ENCODE measurements at regions of chr1 and their contacts with region 1.

Region 1: GRCh38 chr1:64308866-64309265 is 105.4 kb downstream of the UBE2U start:
- DNase-seq: peak in 1 of 2 donors; percentile 70
- H3K4me3 ChIP-seq: no peak overlapping the region
- H3K27ac ChIP-seq: peak overlapping the region; percentile 78 to 90
- H3K4me1 ChIP-seq: no peaks in the 10 kb centered on the region
- H3K27me3 ChIP-seq: no peaks in the 10 kb centered on the region
- CTCF ChIP-seq: no peak
- POLR2A ChIP-seq: no peak

Region 2: DNA sequence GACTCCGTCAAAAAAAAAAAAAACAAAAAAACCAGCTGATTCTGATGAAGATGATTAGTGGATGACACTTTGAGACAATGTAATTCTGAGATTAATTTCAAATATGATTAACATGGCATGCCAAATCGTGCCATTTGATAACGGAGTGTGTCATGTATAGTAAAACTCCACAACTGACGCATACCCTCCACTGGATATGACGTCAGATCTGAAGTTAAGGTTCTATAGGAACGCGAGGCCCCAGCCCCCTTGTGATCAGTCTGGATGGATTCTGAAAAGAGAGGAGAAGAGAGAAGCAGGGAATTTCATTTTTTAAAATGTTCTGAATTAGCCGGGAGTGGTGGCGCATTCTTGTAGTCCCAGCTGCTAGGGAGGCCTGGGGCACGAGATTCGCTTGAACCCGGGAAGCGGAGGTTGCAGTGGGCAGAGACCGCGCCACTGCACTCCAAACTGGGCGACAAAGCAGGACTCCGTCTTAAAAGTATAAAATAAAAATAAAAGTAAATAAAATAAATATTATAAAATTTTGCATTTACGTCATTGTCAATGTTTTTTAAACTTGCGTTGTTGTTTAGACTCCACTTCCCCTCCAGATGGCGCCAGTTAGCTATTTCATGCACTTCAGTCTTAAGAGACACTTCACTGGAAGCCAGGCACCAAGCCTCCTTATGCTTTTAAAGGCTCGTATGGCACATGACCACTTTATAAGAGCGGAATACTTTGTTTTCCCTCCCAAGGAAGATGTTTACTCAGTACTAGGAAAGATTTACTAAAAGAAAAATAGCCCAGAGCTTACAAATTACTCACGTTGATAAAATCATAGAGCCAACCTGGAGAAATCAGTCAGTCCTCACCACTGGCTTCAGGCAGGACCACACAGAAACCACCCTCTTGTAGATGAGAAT is 40.0 kb before region 1 on chr1:
- intact Hi-C with region 1: no loop called
- DNase-seq: peak; percentile 56 to 62
- H3K4me3 ChIP-seq: peak overlapping the region in 2 of 3 donors; percentile 20 to 45
- H3K27ac ChIP-seq: peak overlapping the region; percentile 5 to 73
- H3K4me1 ChIP-seq: no peaks in the 10 kb centered on the region
- H3K27me3 ChIP-seq: no peaks in the 10 kb centered on the region
- CTCF ChIP-seq: peak in 2 of 3 donors; percentile 60 to 84
- POLR2A ChIP-seq: no peak

Region 3: GRCh38 chr1:64337475-64337874 is 28.6 kb after region 1 on chr1:
- intact Hi-C with region 1: no loop called
- DNase-seq: no peak
- H3K4me3 ChIP-seq: no peak overlapping the region
- H3K27ac ChIP-seq: no peak overlapping the region
- H3K4me1 ChIP-seq: no peaks in the 10 kb centered on the region
- H3K27me3 ChIP-seq: no peaks in the 10 kb centered on the region
- CTCF ChIP-seq: no peak
- POLR2A ChIP-seq: no peak

Region 4: DNA sequence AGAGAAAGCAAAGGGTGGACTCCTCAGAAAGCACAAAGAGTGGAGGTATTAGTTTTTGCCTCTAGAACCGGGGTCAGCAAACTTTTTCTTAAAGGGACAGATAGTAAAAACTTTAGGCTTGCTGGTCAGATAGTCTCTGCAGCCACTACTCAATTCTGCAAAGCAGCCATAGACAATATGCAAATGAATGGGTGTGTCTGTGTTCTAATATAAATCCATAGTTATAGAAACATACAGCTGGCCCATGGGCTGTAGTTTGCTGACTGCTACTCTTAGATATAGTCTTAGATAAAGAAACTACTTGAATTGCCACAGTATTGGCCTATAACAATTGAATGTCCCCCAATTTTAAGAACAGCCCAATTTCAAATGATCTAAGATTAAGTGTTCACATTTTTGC is 59.5 kb after region 1 on chr1:
- intact Hi-C with region 1: loop called (anchors 2 kb)
- DNase-seq: no peak
- H3K4me3 ChIP-seq: no peak overlapping the region
- H3K27ac ChIP-seq: no peak overlapping the region
- H3K4me1 ChIP-seq: no peaks in the 10 kb centered on the region
- H3K27me3 ChIP-seq: no peaks in the 10 kb centered on the region
- CTCF ChIP-seq: no peak
- POLR2A ChIP-seq: no peak

Measured in breast epithelium (tissue), 4 donors.